ENCODE measurements at regions of chr1 and their contacts with region 1.

Region 1: DNA sequence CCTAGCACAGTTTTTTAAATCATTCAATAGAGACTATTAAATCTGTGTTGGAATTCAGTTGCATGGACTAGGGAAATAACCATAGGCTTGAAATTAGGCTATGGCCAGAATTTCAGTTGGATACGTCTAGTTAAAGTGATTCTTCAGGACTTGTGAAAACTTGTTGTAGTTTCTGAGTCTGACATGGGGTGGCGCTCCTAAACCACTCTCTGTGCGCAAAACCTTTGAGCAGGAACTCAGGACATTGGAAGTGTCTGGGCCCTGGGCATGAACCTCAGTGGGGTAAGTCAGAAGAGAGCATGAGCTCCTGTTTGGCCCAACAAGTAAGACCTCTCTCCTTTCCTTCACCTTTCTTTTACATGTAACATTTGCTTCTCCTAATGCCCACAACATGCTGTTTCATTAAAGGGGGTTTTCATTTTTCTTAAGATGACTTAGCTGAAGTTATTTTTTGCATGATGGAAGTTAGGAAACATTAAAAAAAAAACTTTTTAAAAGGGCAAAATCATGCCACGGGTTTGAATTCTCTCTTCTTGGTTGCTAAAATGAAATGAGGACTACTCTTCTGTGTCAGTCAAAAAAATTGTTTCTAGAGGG is 17.1 kb upstream of the CCDC190 start:
- DNase-seq: peak; percentile 45
- ATAC-seq: peak; percentile 55
- H3K4me3 ChIP-seq: no peak overlapping the region
- H3K27ac ChIP-seq: no peak overlapping the region
- H3K4me1 ChIP-seq: peaks cover 25% of the 10 kb centered on the region
- H3K27me3 ChIP-seq: peaks cover 0 to 19% of the 10 kb centered on the region in 2 experiments; a peak in 2 of 5 replicates
- CTCF ChIP-seq: peak; percentile 87
- EP300 ChIP-seq: no peak
- POLR2A ChIP-seq: no peak
- RAD21 ChIP-seq: peak; percentile 72

Region 2: DNA sequence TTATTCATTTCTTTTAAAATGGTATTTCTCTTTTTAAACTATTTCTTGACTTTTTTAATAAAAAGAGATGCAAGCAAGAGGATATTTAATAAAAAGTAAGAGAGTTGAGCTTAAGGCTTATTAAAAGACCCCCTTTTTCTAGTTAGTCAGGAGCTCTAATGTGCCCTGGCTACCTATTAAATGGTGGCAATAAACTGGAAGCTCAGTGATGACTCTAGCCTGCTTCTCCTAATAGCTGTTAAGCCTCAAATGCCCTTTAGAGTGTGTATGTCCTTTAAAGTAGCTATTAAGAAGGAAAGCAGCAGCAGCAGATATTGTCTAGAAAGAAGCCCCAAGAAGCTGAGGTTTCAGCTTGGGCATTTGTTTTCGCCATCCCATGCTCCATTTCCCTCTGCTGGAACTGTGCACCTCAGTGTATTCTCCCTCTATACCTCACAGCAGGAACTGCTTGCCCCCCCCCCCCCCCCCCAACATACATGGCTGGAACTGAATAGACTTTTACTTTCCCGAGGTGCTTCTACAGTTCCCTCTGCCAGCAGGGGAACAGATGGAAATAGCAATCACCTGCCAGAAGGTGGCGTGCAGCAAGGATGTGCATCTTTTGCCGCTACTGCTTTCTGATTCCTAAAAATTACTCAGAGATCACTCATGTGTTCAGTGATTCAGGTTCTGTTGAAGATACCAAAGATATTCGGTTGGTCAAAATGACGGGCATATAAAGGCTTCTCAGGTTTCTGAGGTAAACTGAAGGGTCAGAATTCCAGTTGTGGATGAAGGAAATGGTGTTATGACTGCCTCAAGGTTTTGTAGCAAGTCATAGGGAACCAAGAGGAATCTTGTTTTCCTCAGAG is 193.5 kb after region 1 on chr1:
- CTCF ChIA-PET with region 1: interaction called, 4 read pairs
- POLR2A ChIA-PET with region 1: no interaction called
- in situ Hi-C with region 1: loop called (anchors 10 kb)
- intact Hi-C with region 1: loop called (anchors 1 kb)
- DNase-seq: peak; percentile 30
- ATAC-seq: peak; percentile 86
- H3K4me3 ChIP-seq: no peak overlapping the region
- H3K27ac ChIP-seq: no peak overlapping the region
- H3K4me1 ChIP-seq: no peaks in the 10 kb centered on the region
- H3K27me3 ChIP-seq: 0 out of 5 replicates have a peak, but pooled peaks cover 0 to 2% of the 10 kb centered on the region in 2 experiments
- CTCF ChIP-seq: peak; percentile 72
- EP300 ChIP-seq: no peak
- POLR2A ChIP-seq: no peak
- RAD21 ChIP-seq: no peak

Region 3: GRCh38 chr1:163182330-163182949 is 304.3 kb after region 1 on chr1:
- CTCF ChIA-PET with region 1: no interaction called
- POLR2A ChIA-PET with region 1: no interaction called
- in situ Hi-C with region 1: loop called (anchors 5 kb)
- intact Hi-C with region 1: no loop called
- DNase-seq: no peak
- ATAC-seq: no peak
- H3K4me3 ChIP-seq: no peak overlapping the region
- H3K27ac ChIP-seq: no peak overlapping the region
- H3K4me1 ChIP-seq: no peaks in the 10 kb centered on the region
- H3K27me3 ChIP-seq: no peaks in the 10 kb centered on the region
- CTCF ChIP-seq: no peak
- EP300 ChIP-seq: no peak
- POLR2A ChIP-seq: no peak
- RAD21 ChIP-seq: no peak

Measured in HepG2 (cell line).